Left ventricle myocardium inferior (tissue), 1 donor: ENCODE measurements at regions of chr1 and their contacts with region 1.

Region 1: GRCh38 chr1:207259391-207259790 is 62.1 kb upstream of the CD55 start:
- DNase-seq: no peak
- H3K4me3 ChIP-seq: no peak overlapping the region
- H3K27ac ChIP-seq: no peak overlapping the region
- H3K4me1 ChIP-seq: no peaks in the 10 kb centered on the region
- H3K27me3 ChIP-seq: no peaks in the 10 kb centered on the region
- CTCF ChIP-seq: peak; percentile 52

Region 2: DNA sequence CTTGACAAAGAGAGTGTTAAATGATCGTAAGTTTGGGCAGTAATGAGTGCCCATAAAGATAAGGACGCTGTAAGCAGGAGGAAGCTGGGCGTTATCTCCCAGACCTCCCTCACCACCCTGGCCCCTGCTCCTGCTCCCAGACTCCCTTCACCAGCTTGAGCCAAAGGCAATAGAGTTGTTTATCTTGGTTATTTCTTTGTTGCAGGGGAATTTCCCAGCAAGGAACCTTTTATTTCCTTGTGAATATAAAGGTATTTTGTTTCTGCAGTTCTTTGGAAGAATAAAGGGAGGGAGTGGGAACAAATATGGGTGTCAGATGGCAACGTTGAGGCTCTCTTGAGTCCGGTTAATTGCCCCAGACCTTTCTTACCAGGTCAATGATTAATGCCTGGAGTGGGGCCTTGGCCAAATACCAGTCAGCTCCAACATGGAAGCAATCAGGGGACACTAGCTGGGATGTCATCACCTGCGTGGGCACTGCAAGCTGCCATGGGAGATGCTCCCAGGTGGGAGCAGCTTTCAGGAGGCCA is 317.5 kb before region 1 on chr1:
- intact Hi-C with region 1: no loop called
- DNase-seq: no peak
- H3K4me3 ChIP-seq: no peak overlapping the region
- H3K27ac ChIP-seq: no peak overlapping the region
- H3K4me1 ChIP-seq: no peaks in the 10 kb centered on the region
- H3K27me3 ChIP-seq: peaks cover 45% of the 10 kb centered on the region
- CTCF ChIP-seq: no peak

Region 3: DNA sequence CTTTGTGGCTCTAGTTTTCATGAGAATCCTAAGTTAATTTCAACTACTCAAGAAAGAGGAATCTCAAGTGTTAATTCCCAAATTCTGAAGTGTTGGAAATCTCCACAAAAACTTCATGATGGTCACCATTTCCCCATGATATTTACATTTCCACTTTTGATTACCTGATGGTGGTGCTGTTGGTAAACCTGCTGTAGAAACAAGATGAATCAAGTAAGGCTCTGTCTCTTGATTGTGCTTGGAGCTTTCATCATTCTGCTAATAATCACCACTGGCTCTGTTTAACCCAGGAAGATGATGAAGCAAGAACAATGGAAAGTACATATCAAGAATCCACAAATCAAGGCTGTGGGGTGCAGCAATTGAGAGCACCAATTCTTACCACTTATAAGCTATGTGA is 77.6 kb before region 1 on chr1:
- intact Hi-C with region 1: no loop called
- DNase-seq: no peak
- H3K4me3 ChIP-seq: no peak overlapping the region
- H3K27ac ChIP-seq: no peak overlapping the region
- H3K4me1 ChIP-seq: no peaks in the 10 kb centered on the region
- H3K27me3 ChIP-seq: no peaks in the 10 kb centered on the region
- CTCF ChIP-seq: peak; percentile 44

Region 4: DNA sequence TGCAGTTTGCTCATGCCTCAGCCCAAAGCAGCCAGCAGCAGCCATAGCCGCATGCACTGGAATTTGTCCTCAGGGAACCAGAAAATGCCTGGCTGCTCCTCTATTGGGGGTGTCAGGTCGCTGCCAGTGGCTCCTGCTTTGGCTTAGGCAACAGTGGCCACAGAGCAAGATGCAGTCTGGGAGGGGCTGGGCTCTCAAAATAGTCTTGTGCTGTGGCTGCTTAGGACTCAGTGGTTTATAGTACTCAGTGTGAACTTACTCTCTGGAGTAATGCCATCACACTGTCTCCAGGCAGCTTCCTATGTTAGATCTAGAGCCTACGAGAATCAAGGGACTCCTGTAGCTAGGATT is 87.1 kb after region 1 on chr1:
- intact Hi-C with region 1: loop called (anchors 10 kb)
- DNase-seq: peak; percentile 19
- H3K4me3 ChIP-seq: no peak overlapping the region
- H3K27ac ChIP-seq: peak overlapping the region; percentile 56
- H3K4me1 ChIP-seq: peaks cover 18% of the 10 kb centered on the region
- H3K27me3 ChIP-seq: no peaks in the 10 kb centered on the region
- CTCF ChIP-seq: no peak

Region 5: DNA sequence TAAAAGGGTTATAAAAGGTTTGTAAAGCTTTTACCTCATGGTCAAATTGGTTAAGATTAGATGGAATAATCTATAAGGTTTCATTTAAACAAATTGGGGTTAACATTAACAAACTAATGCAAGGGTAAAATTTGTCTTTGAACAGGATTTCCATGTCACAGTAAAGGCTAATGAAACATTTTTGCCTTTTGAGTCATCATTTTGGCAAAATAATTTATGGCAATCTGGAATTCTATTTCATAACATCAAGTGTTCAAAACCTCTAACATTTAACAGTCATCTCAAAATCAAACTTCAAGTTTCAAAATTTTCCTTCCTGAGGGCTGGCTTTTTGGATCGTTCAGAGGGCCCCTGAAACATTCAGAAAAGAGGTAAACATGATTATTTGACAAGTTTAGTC is 485.9 kb after region 1 on chr1:
- intact Hi-C with region 1: no loop called
- DNase-seq: no peak
- H3K4me3 ChIP-seq: no peak overlapping the region
- H3K27ac ChIP-seq: no peak overlapping the region
- H3K4me1 ChIP-seq: peaks cover 24% of the 10 kb centered on the region
- H3K27me3 ChIP-seq: no peaks in the 10 kb centered on the region
- CTCF ChIP-seq: no peak